ENCODE measurements at regions of chr1 and their contacts with region 1.

Region 1: DNA sequence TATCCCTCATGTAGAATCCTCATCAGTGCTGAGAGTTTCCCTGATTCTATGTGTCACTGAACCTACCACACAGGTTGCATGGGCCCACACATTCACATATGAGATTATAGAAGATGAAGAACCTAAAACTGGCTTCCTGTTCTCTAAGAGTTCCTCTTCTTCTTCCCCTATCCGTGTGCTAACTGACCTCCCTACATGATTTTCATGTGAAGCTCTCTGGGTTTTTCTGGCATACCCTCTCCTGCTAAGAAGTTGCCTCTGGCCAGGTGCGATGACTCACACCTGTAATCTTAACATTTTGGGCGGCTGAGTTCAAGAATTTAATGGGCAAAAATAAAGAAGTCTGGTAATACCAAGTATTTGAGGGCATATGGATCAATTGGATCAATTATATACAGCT is 5.5 kb upstream of the CD244 start:
- DNase-seq: no peak
- ATAC-seq: no peak
- H3K4me3 ChIP-seq: no peak overlapping the region
- H3K27ac ChIP-seq: no peak overlapping the region
- H3K4me1 ChIP-seq: no peaks in the 10 kb centered on the region
- H3K27me3 ChIP-seq: no peaks in the 10 kb centered on the region
- CTCF ChIP-seq: no peak
- POLR2A ChIP-seq: no peak
- RAD21 ChIP-seq: no peak

Region 2: GRCh38 chr1:160646711-160647328 is 221.3 kb before region 1 on chr1 and contains the start of gene SLAMF1:
- CTCF ChIA-PET with region 1: no interaction called
- POLR2A ChIA-PET with region 1: no interaction called
- RAD21 ChIA-PET with region 1: no interaction called
- intact Hi-C with region 1: no loop called
- DNase-seq: no peak
- ATAC-seq: no peak
- H3K4me3 ChIP-seq: no peak within 1 kb of the TSS
- H3K27ac ChIP-seq: no peak within 1 kb of the TSS
- H3K4me1 ChIP-seq: no peaks in the 10 kb centered on the region
- H3K27me3 ChIP-seq: no peaks in the 10 kb centered on the region
- CTCF ChIP-seq: no peak
- POLR2A ChIP-seq: no peak
- RAD21 ChIP-seq: no peak
- total RNA-seq, gene SLAMF1: 0.30 TPM

Region 3: DNA sequence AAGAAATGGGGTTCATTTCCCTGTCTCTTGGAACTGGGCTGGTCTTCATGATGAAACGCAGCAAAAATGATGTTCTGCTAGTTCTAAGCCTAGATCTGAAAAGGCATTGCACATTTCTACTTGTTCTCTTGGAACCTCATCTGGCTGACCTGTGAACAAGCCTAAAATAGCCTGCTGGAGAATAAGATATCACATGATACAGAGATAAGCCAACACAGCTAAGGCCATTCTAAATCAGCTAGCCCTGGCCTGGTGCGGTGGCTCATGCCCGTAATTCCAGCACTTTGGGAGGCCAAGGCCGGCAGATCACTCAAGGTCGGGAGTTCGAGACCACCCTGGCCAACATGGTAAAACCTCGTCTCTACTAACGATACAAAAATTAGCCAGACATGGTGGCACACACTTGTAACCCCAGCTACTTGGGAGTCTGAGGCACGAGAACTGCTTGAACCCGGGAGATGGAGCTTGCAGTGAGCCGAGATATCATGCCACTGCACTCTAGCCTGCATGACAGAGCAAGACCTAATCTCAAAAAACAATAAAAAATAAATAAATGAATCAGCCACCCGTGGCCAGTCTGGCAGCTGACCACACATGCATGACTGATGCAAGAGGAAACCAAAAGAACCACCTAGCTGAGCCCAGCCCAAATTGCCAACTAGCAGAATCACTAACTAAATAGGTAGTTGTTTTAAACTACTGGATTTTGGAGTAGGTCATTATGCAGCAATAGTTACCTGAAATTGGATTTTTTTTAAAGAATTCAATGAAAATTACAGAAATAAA is 23.5 kb before region 1 on chr1:
- CTCF ChIA-PET with region 1: no interaction called
- POLR2A ChIA-PET with region 1: no interaction called
- RAD21 ChIA-PET with region 1: no interaction called
- intact Hi-C with region 1: loop called (anchors 2 kb)
- DNase-seq: no peak
- ATAC-seq: no peak
- H3K4me3 ChIP-seq: no peak overlapping the region
- H3K27ac ChIP-seq: no peak overlapping the region
- H3K4me1 ChIP-seq: no peaks in the 10 kb centered on the region
- H3K27me3 ChIP-seq: no peaks in the 10 kb centered on the region
- CTCF ChIP-seq: no peak
- POLR2A ChIP-seq: no peak
- RAD21 ChIP-seq: no peak